CD4-positive, alpha-beta T cell (primary cell): ENCODE measurements at regions of chr1 and their contacts with region 1.

Region 1: DNA sequence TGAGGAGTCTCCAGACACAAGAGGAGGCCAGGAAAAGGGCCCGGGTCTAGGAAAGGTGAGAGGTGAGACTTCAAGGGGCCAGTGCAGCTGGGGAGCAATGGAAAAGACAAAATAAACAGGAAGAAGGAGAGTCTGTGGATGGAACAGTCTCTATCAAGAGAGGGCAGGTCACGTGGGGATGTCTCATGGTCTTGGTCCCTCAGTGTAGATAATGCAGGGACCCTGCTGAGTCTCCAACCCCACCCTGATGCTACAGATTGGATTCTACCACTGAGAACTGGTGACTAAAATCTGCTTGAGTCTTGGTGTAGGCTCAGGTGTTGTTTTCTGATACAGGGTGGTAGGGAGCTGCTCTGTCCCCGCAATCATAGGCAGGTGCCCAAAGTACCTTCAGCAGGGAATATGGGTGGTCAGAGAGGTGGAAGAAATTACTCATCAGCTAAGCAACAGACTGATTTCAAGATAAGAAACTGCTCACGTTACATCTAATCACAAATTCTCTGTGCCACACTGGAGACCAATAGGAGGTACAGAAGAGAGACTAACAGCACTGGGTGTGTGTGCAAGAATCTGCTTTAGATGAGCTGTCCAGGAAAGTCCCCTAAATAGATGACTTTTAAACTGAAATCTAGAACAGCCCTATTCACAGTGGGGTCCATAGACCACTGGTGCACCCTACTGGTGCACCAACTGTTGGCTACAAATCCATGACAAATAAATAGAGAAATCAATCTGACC is 101.5 kb upstream of the TLR5 start:
- DNase-seq: peak in 5 of 14 experiments; percentile 14 to 61 (median 28)
- ATAC-seq: peak; percentile 24
- H3K4me3 ChIP-seq: no peak overlapping the region
- H3K4me3 Mint-ChIP-seq: no peak overlapping the region
- H3K27ac ChIP-seq: no peak overlapping the region
- H3K27ac Mint-ChIP-seq: peak overlapping the region; percentile 6
- H3K4me1 ChIP-seq: peaks cover 29% of the 10 kb centered on the region
- H3K4me1 Mint-ChIP-seq: peaks cover 73% of the 10 kb centered on the region
- H3K27me3 ChIP-seq: no peaks in the 10 kb centered on the region
- H3K27me3 Mint-ChIP-seq: no peaks in the 10 kb centered on the region
- CTCF ChIP-seq: peak; percentile 14

Region 2: GRCh38 chr1:222950892-222951291 is 293.6 kb before region 1 on chr1:
- CTCF ChIA-PET with region 1: no interaction called
- POLR2A ChIA-PET with region 1: no interaction called
- intact Hi-C with region 1: no loop called
- DNase-seq: no peak
- ATAC-seq: no peak
- H3K4me3 ChIP-seq: no peak overlapping the region
- H3K4me3 Mint-ChIP-seq: no peak overlapping the region
- H3K27ac ChIP-seq: no peak overlapping the region
- H3K27ac Mint-ChIP-seq: no peak overlapping the region
- H3K4me1 ChIP-seq: no peaks in the 10 kb centered on the region
- H3K4me1 Mint-ChIP-seq: no peaks in the 10 kb centered on the region
- H3K27me3 ChIP-seq: no peaks in the 10 kb centered on the region
- H3K27me3 Mint-ChIP-seq: no peaks in the 10 kb centered on the region
- CTCF ChIP-seq: no peak

Region 3: GRCh38 chr1:223207293-223208066 is 37.1 kb before region 1 on chr1:
- CTCF ChIA-PET with region 1: no interaction called
- POLR2A ChIA-PET with region 1: no interaction called
- intact Hi-C with region 1: no loop called
- DNase-seq: no peak
- ATAC-seq: no peak
- H3K4me3 ChIP-seq: no peak overlapping the region
- H3K4me3 Mint-ChIP-seq: no peak overlapping the region
- H3K27ac ChIP-seq: no peak overlapping the region
- H3K27ac Mint-ChIP-seq: no peak overlapping the region
- H3K4me1 ChIP-seq: no peaks in the 10 kb centered on the region
- H3K4me1 Mint-ChIP-seq: no peaks in the 10 kb centered on the region
- H3K27me3 ChIP-seq: no peaks in the 10 kb centered on the region
- H3K27me3 Mint-ChIP-seq: no peaks in the 10 kb centered on the region
- CTCF ChIP-seq: no peak

Region 4: DNA sequence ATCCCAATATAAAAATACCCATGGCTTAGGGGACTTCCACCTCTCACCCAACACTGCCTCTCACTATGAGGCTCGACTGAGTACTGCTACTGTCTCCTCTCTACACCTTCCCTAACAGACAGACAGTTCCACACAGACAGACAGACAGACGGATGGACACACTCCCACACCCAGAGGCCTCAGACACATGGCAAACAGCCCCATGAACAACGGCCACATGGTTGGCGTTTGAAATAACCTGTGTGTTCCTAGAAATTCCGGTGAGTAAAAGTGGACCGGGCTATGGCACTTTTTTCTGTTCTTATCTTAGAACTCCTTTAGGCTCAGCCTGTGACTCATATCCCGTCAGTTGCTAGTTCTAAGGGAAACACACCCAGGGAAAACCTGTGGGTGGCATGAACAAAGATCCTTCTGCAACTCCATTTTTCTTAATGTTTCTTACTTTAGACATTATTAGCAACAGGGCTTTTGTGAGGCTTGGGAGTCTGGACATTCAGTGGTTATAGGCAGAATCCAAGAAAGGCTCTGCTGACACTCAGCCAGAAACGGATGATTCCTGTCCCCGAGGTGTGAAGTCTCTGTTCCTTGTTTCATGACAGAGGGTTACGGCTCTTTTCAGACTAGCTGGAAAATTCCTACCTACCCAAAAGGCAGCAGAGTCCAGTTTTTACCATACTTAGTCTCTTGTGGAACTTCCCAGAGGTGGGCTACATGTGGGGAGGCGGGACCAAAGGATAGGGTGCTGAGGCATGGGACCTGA is 10.9 kb before region 1 on chr1:
- CTCF ChIA-PET with region 1: no interaction called
- POLR2A ChIA-PET with region 1: interaction called, 7 read pairs
- intact Hi-C with region 1: loop called in 1 of 2 experiments (anchors 2 kb)
- DNase-seq: peak in 2 of 14 experiments; percentile 47 to 48
- ATAC-seq: peak; percentile 41
- H3K4me3 ChIP-seq: no peak overlapping the region
- H3K4me3 Mint-ChIP-seq: peak overlapping the region; percentile 1
- H3K27ac ChIP-seq: peak overlapping the region in 1 of 2 donors; percentile 86
- H3K27ac Mint-ChIP-seq: peak overlapping the region; percentile 95
- H3K4me1 ChIP-seq: peaks cover 62% of the 10 kb centered on the region
- H3K4me1 Mint-ChIP-seq: peaks cover 74% of the 10 kb centered on the region
- H3K27me3 ChIP-seq: no peaks in the 10 kb centered on the region
- H3K27me3 Mint-ChIP-seq: no peaks in the 10 kb centered on the region
- CTCF ChIP-seq: no peak

Region 5: GRCh38 chr1:223363856-223364684 is 119.5 kb after region 1 on chr1 and contains the start of gene SUSD4:
- CTCF ChIA-PET with region 1: no interaction called
- POLR2A ChIA-PET with region 1: interaction called, 5 read pairs
- intact Hi-C with region 1: loop called in 1 of 2 experiments (anchors 10 kb)
- DNase-seq: peak; percentile 55 to 91 (median 76)
- ATAC-seq: peak; percentile 89
- H3K4me3 ChIP-seq: peak within 1 kb of the TSS; percentile 66
- H3K4me3 Mint-ChIP-seq: peak within 1 kb of the TSS; percentile 98
- H3K27ac ChIP-seq: no peak within 1 kb of the TSS
- H3K27ac Mint-ChIP-seq: peak within 1 kb of the TSS; percentile 82
- H3K4me1 ChIP-seq: peaks cover 22% of the 10 kb centered on the region
- H3K4me1 Mint-ChIP-seq: peaks cover 39% of the 10 kb centered on the region
- H3K27me3 ChIP-seq: peaks cover 0 to 4% of the 10 kb centered on the region in 2 experiments
- H3K27me3 Mint-ChIP-seq: no peaks in the 10 kb centered on the region
- CTCF ChIP-seq: no peak
- total RNA-seq, gene SUSD4: 13.0 to 13.8 TPM